Mammary epithelial cell (primary cell): ENCODE measurements at regions of chr19 and their contacts with region 1.

Region 1: GRCh38 chr19:1490311-1491113 is at the start of gene PCSK4:
- DNase-seq: peak; percentile 99
- H3K4me3 ChIP-seq: peak within 1 kb of the TSS; percentile 53 to 72 (median 60)
- H3K27ac ChIP-seq: peak within 1 kb of the TSS; percentile 43
- H3K4me1 ChIP-seq: peaks cover 13% of the 10 kb centered on the region
- H3K27me3 ChIP-seq: no peaks in the 10 kb centered on the region
- CTCF ChIP-seq: no peak
- total RNA-seq, gene PCSK4: 1.0 to 3.5 TPM

Region 2: DNA sequence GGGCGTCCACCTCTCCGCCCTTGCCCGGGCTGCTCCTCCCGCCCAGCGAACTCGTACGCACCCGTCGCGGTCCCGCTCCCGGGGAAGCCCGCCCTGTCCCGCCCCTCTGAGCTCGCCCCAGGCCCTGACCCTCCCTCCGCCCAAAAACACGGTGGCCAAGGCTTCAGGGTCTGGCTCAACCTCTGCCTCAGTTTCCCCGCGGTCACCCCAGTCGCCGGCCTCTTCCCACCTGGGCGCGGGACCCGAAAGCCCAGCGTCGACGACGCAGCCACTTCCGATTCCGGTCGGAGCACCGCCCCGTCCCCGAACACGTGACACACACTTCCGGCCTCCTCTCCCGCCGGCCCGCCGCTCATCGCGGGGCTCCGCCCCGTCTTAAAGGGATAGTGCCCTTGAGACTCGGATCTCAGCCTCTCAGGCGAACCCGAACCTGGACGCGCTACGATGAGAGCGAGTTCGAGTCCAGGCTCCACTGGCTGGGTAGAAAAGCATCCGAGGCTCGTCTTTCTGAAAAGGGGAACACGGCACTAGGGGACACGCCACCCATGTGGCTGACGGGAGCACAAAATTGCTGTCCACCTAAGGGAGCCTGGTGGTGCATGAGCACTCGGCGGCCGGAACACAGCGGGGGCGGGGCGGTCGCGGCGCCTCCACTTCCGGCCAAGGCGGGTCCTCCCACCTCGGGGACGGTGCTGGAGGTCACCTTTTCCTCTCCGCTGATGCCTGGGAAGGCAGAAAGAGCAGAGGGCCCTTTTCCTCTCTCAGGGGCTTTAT is 11.4 kb before region 1 on chr19 and contains the start of gene C19orf25:
- CTCF ChIA-PET with region 1: no interaction called
- dilution Hi-C with region 1: no loop called
- in situ Hi-C with region 1: no loop called
- intact Hi-C with region 1: loop called (anchors 1 kb)
- DNase-seq: peak; percentile 91
- H3K4me3 ChIP-seq: peak within 1 kb of the TSS; percentile 88 to 92 (median 91)
- H3K27ac ChIP-seq: peak within 1 kb of the TSS; percentile 43
- H3K4me1 ChIP-seq: peaks cover 3% of the 10 kb centered on the region
- H3K27me3 ChIP-seq: no peaks in the 10 kb centered on the region
- CTCF ChIP-seq: no peak
- total RNA-seq, gene C19orf25: 25.8 to 41.9 TPM

Region 3: DNA sequence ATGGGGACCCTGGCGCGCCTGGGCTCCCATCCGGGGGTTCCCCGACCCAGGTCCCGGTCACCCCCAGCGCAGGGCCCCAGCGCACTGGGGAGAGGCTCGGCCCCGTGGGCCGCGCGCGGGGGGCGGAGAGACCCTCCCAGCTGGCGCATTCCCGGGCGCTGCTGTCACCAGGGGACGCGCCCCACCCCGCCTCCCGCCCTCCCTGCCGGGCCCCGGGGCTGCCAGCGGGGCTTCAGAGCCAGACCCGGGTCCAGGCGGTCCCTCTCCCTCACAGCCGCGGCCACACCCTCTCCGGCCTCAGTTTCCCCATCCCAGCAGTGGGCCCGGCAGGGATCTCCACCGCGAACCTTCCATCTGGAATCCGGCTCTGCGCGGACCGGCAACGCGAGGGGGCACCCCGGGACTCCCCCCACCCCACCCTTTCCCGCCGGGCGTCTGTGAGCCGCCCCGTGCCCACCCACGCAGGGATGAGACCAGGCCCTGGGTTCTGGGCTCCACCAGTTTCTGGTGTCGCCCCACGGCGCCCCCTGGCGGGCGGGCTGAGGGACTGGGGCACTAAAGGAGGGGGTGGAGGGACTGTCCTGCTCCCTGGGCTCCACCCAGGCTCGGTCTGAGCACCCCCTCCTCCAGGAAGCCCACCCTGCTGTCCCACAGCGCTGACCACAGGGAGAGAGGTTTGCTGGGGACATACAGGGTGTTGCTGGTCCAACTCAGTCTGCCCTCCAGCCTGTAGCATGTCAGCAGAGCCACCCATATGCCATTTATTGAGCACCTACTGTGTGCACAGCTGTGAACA is 23.2 kb after region 1 on chr19:
- CTCF ChIA-PET with region 1: no interaction called
- dilution Hi-C with region 1: no loop called
- in situ Hi-C with region 1: no loop called
- intact Hi-C with region 1: loop called (anchors 2 kb)
- DNase-seq: peak; percentile 42
- H3K4me3 ChIP-seq: peak overlapping the region; percentile 52 to 77 (median 66)
- H3K27ac ChIP-seq: peak overlapping the region; percentile 10
- H3K4me1 ChIP-seq: peaks cover 9% of the 10 kb centered on the region
- H3K27me3 ChIP-seq: no peaks in the 10 kb centered on the region
- CTCF ChIP-seq: peak; percentile 56 to 92

Region 4: DNA sequence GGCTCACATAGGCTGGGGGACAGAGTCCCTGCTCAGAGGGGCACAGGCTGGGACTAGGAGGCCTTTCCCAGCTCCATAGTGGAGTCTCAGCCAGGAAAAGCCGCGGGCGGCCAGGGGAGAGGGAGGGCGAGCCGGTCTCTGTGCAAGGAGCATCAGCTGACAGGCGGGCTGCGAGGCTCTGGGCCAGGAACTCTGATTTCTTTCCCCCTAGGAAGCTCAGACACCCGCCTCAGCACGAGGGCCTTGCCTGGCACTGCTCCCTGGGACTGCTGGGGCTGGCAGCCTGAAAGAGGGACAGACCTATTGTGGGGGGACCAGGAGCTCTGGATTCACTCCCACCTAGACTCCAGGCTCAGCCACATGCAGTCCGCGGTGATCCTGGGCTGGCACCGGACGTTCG is 31.1 kb after region 1 on chr19:
- CTCF ChIA-PET with region 1: interaction called, 11 read pairs
- dilution Hi-C with region 1: no loop called
- in situ Hi-C with region 1: no loop called
- intact Hi-C with region 1: no loop called
- DNase-seq: no peak
- H3K4me3 ChIP-seq: no peak overlapping the region
- H3K27ac ChIP-seq: no peak overlapping the region
- H3K4me1 ChIP-seq: no peaks in the 10 kb centered on the region
- H3K27me3 ChIP-seq: peaks cover 13% of the 10 kb centered on the region
- CTCF ChIP-seq: no peak

Region 5: GRCh38 chr19:1618157-1619093 is 127.9 kb after region 1 on chr19:
- CTCF ChIA-PET with region 1: no interaction called
- dilution Hi-C with region 1: no loop called
- in situ Hi-C with region 1: no loop called
- intact Hi-C with region 1: no loop called
- DNase-seq: peak; percentile 24
- H3K4me3 ChIP-seq: no peak overlapping the region
- H3K27ac ChIP-seq: no peak overlapping the region
- H3K4me1 ChIP-seq: no peaks in the 10 kb centered on the region
- H3K27me3 ChIP-seq: no peaks in the 10 kb centered on the region
- CTCF ChIP-seq: peak; percentile 40 to 62